Activated T-helper 2 cell treated with anti-CD3 and anti-CD28 coated beads, Interferon-gamma antibody, Interleukin-2, Interleukin-4, amounts not matched to agents 10 μg/mL and 5 μg/mL and 100 μg/mL, durations not matched to agents 14 hours and 24 hours and 36 hours (primary cell): ENCODE measurements at regions of chr21 and their contacts with region 1.

Region 1: DNA sequence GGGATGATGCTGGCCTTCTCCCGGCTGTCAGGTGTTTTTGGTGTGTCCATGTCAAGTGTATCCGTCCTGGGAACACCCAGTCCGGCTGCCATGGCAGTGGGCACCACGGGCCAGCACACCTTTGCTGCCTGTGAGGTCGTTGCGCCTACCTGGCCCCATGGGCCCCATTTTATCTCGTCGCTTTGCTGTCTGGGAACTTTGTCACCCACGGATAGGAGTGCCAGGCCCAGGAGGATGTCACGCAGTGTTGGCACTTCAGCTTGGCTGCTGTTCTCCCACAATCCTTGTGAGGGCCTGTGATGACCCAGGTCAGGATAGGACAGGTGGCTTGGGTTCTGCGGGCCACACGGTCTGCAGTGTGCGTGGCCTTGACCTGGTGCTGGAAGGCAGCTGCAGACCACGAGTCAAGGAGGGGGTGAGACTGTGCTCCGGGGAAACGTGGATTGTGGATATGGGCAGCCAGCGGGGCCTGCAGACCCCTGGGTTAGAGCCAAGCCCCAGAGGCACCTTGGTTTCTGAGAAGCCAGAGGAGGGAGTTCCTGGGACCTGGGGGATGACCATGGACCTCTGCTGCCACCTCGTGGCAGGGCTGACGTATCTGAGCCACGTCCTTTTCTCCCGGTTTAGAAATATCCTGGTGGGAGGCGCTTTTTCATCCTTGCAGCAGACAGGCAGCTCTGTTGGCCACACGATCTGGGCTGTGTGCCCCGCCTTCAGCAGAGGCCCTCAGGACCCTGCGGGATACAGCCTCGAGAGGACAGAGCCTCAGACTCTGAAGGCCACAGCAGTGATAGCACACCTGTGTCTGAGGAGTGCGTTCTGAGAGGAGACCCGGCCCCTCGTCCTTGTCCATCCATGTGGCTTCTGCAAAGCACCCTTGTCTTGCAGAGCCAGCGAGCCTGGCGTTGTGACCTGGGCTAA is 161.1 kb upstream of the COL6A1 start:
- DNase-seq: peak; percentile 69
- H3K4me3 Mint-ChIP-seq: no peak overlapping the region
- H3K27ac Mint-ChIP-seq: no peak overlapping the region
- H3K4me1 Mint-ChIP-seq: peaks cover 38% of the 10 kb centered on the region
- H3K27me3 Mint-ChIP-seq: peaks cover 7% of the 10 kb centered on the region

Region 2: GRCh38 chr21:45074818-45075595 is 745.4 kb before region 1 on chr21:
- intact Hi-C with region 1: loop called (anchors 2 kb)
- DNase-seq: peak; percentile 22
- H3K4me3 Mint-ChIP-seq: peak overlapping the region; percentile 81
- H3K27ac Mint-ChIP-seq: no peak overlapping the region
- H3K4me1 Mint-ChIP-seq: peaks cover 48% of the 10 kb centered on the region
- H3K27me3 Mint-ChIP-seq: no peaks in the 10 kb centered on the region

Region 3: GRCh38 chr21:45287438-45288391 is 532.7 kb before region 1 on chr21 and contains the start of gene POFUT2:
- intact Hi-C with region 1: loop called (anchors 1 kb)
- DNase-seq: peak; percentile 97
- H3K4me3 Mint-ChIP-seq: peak within 1 kb of the TSS; percentile 80
- H3K27ac Mint-ChIP-seq: peak within 1 kb of the TSS; percentile 58
- H3K4me1 Mint-ChIP-seq: peaks cover 6% of the 10 kb centered on the region
- H3K27me3 Mint-ChIP-seq: no peaks in the 10 kb centered on the region
- total RNA-seq, gene POFUT2: 14.1 and 16.1 TPM in 2 replicates

Region 4: DNA sequence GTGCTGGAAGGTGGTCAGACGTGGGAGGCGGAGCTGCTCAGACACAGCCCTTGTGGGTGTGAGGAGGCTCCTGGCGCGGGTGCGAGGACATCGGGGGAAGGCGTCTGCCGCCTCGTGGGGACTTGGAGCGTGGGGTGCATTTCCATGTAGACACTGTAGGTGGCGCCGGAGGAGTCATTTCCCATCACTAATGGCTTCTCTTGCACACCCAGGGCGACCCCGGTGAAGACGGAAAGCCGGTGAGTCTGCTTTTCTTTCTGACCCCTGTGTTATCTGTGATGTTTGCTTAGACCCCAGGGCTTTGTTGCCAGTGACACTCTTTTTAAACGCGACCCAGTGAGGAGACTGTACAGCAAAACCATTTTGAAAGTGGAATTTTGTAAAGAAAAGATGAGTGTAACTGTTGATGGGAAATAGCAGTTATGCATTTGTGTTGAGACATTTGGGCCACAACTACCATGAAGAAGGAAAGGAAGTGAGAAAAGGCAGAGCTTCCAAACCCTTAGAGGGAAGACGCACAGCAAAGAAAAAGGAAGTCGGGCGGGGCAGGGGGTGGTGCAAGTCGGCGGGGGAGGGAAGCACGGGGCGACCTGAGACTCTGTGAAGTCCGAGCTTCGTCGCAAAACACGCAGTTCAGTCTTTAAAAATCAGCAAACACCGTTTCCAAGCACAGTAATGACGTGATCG is 342.2 kb before region 1 on chr21:
- intact Hi-C with region 1: loop called (anchors 2 kb)
- DNase-seq: peak; percentile 73
- H3K4me3 Mint-ChIP-seq: peak overlapping the region; percentile 83
- H3K27ac Mint-ChIP-seq: peak overlapping the region; percentile 96
- H3K4me1 Mint-ChIP-seq: peaks cover 22% of the 10 kb centered on the region
- H3K27me3 Mint-ChIP-seq: no peaks in the 10 kb centered on the region

Region 5: GRCh38 chr21:45590246-45590725 is 230.1 kb before region 1 on chr21:
- intact Hi-C with region 1: loop called (anchors 2 kb)
- DNase-seq: peak; percentile 66
- H3K4me3 Mint-ChIP-seq: no peak overlapping the region
- H3K27ac Mint-ChIP-seq: no peak overlapping the region
- H3K4me1 Mint-ChIP-seq: peaks cover 8% of the 10 kb centered on the region
- H3K27me3 Mint-ChIP-seq: peaks cover 21% of the 10 kb centered on the region

Region 6: DNA sequence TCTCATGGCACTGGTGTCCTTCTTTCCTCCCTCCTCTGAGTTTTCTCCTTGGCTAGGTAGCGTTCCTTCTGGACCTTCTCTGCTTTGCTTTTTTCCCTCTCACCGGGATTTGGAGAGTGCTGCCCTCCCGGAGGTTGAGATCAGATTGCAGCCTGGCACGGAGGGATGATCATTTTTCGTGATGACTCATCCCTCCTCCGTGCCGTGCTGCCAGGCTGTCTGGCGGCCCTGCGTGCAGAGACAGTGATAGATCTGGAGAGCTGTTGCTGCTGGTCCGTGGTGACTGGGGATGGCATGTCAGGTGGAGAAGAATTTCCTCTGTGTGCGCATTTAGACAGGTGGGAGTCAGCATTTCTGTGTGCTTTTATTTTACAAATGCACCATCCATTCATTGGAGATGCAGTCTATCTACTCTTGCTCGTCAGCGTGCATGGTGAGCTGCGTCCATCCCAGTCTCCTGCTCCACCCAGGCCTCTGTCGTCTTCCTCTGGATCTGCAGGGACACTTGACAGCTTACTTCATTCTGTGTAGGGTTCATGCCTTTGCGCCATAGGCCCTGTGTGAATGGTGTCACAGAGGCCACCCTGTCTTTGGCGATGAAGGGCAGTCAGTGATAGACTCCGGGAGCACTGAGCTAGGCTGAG is 72.5 kb before region 1 on chr21:
- intact Hi-C with region 1: no loop called
- DNase-seq: no peak
- H3K4me3 Mint-ChIP-seq: no peak overlapping the region
- H3K27ac Mint-ChIP-seq: no peak overlapping the region
- H3K4me1 Mint-ChIP-seq: no peaks in the 10 kb centered on the region
- H3K27me3 Mint-ChIP-seq: no peaks in the 10 kb centered on the region

Region 7: GRCh38 chr21:45768751-45769070 is 51.7 kb before region 1 on chr21:
- intact Hi-C with region 1: loop called (anchors 1 kb)
- DNase-seq: no peak
- H3K4me3 Mint-ChIP-seq: no peak overlapping the region
- H3K27ac Mint-ChIP-seq: peak overlapping the region; percentile 82
- H3K4me1 Mint-ChIP-seq: peaks cover 44% of the 10 kb centered on the region
- H3K27me3 Mint-ChIP-seq: no peaks in the 10 kb centered on the region

Region 8: DNA sequence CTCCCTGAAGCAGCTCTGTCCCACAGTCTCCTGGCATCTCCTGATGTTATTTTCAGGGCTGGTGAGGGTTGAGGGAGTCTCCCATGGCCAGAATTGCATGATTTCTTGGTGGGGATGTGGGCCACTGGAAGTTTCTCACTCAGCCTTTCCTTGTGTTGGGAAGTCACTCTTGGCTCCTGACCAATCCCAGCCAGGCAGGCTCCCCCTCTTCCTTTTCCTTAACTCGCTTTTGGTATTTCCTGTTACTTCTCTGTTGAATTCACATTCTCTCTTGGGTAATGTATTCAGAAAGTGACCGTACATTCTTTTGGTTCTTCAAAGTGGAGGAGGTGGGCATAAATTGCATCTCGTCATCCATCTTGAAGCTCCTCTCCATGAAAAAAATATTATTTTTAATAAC is 41.2 kb before region 1 on chr21:
- intact Hi-C with region 1: no loop called
- DNase-seq: no peak
- H3K4me3 Mint-ChIP-seq: no peak overlapping the region
- H3K27ac Mint-ChIP-seq: no peak overlapping the region
- H3K4me1 Mint-ChIP-seq: no peaks in the 10 kb centered on the region
- H3K27me3 Mint-ChIP-seq: peaks cover 2% of the 10 kb centered on the region

Region 9: DNA sequence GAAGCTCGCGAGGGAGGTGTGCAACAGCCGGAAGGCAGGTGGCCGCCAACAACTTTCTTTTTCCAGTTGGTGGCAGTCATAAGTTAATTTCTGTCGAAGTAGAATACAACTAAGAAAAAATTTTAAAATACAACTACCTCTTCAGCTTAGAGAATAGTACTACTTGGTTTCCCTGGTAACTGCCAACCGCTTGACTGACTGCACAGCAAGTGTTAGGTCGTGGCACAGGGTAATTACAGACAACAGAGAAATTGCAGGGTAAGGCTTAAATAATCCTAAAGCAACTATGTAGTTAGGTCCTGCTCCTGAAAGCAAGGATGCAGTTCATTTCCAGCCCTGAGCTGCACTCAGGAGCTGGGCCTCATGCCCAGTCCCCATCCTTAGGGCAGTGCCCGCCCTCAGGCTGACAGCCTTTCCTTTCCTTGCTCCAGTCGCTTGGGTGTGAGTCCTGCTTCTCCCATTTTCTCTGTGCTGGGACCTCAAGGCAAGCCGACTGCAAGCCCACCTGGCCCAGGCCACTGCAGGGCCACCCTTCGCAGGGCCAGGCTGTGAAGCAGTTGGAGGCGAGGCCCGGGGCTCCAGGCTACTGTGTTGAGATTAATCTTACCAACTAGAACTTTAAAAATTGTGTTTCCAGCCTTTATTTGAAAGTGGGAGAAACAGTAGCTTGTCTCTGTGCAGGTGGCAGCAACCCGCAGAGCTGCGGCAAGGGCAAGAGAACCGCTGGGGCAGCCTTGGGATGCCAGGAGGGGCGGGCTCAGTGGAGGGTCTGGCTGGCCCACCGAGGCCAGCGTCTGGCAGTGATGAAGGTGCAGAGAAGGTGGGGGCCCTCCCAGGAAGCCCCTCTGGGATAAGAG is 28.6 kb before region 1 on chr21:
- intact Hi-C with region 1: no loop called
- DNase-seq: no peak
- H3K4me3 Mint-ChIP-seq: no peak overlapping the region
- H3K27ac Mint-ChIP-seq: no peak overlapping the region
- H3K4me1 Mint-ChIP-seq: no peaks in the 10 kb centered on the region
- H3K27me3 Mint-ChIP-seq: no peaks in the 10 kb centered on the region

Region 10: DNA sequence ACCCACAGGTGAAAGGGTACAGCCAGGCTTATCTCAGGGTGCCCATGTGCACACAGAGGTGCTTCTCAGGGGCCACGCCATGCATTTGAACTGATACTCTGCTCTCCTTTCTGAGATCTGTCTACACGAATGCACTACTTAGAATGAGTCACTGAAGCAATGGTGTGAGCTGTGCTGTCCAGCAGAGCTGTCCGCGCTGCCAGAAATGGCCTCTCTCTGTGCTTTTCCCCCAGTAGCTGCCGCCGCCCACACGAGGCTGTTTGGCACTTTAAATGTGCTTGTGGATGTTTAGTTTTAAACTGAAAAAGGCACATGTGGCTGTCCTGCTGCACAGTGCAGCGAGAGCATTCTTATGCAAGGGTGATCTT is 74.0 kb after region 1 on chr21:
- intact Hi-C with region 1: no loop called
- DNase-seq: no peak
- H3K4me3 Mint-ChIP-seq: no peak overlapping the region
- H3K27ac Mint-ChIP-seq: no peak overlapping the region
- H3K4me1 Mint-ChIP-seq: peaks cover 7% of the 10 kb centered on the region
- H3K27me3 Mint-ChIP-seq: peaks cover 17% of the 10 kb centered on the region